ENCODE measurements at regions of chr14 and their contacts with region 1.

Region 1: DNA sequence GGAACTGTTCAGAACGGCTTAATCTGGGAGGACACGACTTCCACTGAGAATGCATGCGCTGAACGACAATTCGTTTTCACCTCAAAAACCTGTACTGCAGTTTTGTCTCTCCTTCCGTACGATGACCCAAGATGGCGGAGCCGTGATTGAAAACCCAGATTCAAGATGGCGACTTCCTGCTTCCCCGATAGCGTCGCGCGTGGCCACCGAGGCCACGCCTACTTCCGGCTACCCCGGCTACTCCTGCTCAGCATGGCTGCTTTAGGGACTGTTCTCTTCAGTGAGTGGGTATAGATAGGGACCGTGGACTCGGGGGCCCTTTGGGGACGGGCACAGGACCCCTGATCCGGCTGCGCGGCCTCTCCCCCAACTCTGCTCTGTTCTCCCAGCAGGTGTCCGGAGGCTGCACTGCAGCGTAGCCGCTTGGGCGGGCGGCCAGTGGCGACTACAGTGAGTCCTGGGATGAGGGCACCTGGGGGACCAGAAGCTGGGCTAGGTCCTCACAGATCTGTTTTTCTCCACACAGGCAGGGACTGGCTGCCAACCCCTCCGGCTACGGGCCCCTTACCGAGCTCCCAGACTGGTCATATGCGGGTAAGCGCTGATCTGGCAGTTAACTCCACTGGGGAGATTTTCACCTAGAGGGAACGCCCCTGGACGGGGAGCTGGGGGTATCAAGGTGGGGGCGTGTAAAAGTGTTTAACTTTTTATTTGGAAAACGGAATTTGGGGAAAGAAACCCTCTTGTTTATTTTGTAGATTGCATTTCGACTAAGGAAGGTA is at the start of gene MRPL52:
- DNase-seq: peak; percentile 76
- ATAC-seq: peak; percentile 94
- H3K4me3 Mint-ChIP-seq: peak within 1 kb of the TSS; percentile 93
- H3K27ac Mint-ChIP-seq: peak within 1 kb of the TSS; percentile 97
- H3K4me1 Mint-ChIP-seq: peaks cover 27% of the 10 kb centered on the region
- H3K27me3 Mint-ChIP-seq: no peaks in the 10 kb centered on the region
- CTCF ChIP-seq: no peak
- total RNA-seq, gene MRPL52: 142 and 150 TPM in 2 replicates

Region 2: GRCh38 chr14:22802860-22803686 is 26.8 kb before region 1 on chr14:
- CTCF ChIA-PET with region 1: no interaction called
- POLR2A ChIA-PET with region 1: interaction called, 73 read pairs
- intact Hi-C with region 1: no loop called
- DNase-seq: no peak
- ATAC-seq: peak; percentile 87
- H3K4me3 Mint-ChIP-seq: peak overlapping the region; percentile 74
- H3K27ac Mint-ChIP-seq: peak overlapping the region; percentile 93
- H3K4me1 Mint-ChIP-seq: peaks cover 81% of the 10 kb centered on the region
- H3K27me3 Mint-ChIP-seq: no peaks in the 10 kb centered on the region
- CTCF ChIP-seq: no peak

Measured in activated B cell treated with CpG ODN at 0.5 μM for 24 hours (primary cell).